Astrocyte of the cerebellum (primary cell): ENCODE measurements at regions of chr14 and their contacts with region 1.

Region 1: GRCh38 chr14:90645842-90646443 is 170.3 kb downstream of the TTC7B start:
- DNase-seq: peak; percentile 29
- H3K4me3 ChIP-seq: no peak overlapping the region
- CTCF ChIP-seq: no peak

Region 2: GRCh38 chr14:90569606-90570387 is 76.1 kb before region 1 on chr14:
- in situ Hi-C with region 1: loop called (anchors 5 kb)
- DNase-seq: no peak
- H3K4me3 ChIP-seq: no peak overlapping the region
- CTCF ChIP-seq: no peak

Region 3: GRCh38 chr14:90611936-90612335 is 34.0 kb before region 1 on chr14:
- in situ Hi-C with region 1: loop called (anchors 5 kb)
- DNase-seq: no peak
- H3K4me3 ChIP-seq: no peak overlapping the region
- CTCF ChIP-seq: no peak